ENCODE measurements at regions of chr17 and their contacts with region 1.

Region 1: DNA sequence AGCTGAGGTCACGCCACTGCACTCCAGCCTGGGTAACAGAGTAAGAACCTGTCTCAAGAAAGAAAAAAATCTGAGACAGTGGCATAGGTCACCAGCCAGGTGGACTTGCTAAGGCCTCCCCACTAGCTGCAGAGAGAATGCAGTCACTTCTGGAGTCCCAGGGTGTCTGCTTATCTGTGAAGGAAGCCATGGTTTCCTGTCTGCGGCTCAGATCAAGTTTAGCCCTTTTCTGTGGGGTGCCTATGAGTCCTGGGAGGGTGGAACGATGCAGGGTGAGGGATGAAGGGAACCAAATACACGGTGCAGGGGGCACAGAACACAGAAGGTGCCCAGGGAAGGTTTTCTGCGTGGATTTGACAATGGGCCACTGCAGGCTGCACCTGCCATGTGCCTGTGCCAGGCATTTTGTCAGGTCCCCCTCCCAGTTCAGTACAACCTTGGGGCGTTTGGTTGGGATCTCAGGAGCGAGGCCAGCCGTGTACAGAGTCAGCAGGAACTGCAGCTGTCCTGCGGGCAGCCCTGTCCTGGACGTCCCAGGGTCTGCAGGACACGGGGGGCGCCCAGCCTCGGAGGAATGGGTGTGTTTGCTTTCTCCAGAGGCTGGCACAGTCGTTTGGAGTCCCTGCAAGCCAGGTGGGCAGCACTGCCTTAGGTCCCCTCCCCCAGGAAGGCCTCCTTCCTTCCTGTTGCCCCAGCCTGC is 41.8 kb downstream of the RAB11FIP4 start:
- DNase-seq: peak; percentile 79
- ATAC-seq: peak; percentile 97
- H3K4me3 Mint-ChIP-seq: peak overlapping the region; percentile 50
- H3K27ac Mint-ChIP-seq: no peak overlapping the region
- H3K4me1 Mint-ChIP-seq: peaks cover 27% of the 10 kb centered on the region
- H3K27me3 Mint-ChIP-seq: peaks cover 30% of the 10 kb centered on the region

Region 2: GRCh38 chr17:31099016-31099415 is 334.2 kb before region 1 on chr17:
- CTCF ChIA-PET with region 1: no interaction called
- POLR2A ChIA-PET with region 1: no interaction called
- DNase-seq: no peak
- ATAC-seq: no peak
- H3K4me3 Mint-ChIP-seq: no peak overlapping the region
- H3K27ac Mint-ChIP-seq: no peak overlapping the region
- H3K4me1 Mint-ChIP-seq: peaks cover 11% of the 10 kb centered on the region
- H3K27me3 Mint-ChIP-seq: no peaks in the 10 kb centered on the region

Region 3: GRCh38 chr17:31524926-31525800 is 91.9 kb after region 1 on chr17:
- CTCF ChIA-PET with region 1: interaction called, 26 read pairs
- POLR2A ChIA-PET with region 1: no interaction called
- DNase-seq: peak; percentile 88
- ATAC-seq: peak; percentile 84
- H3K4me3 Mint-ChIP-seq: no peak overlapping the region
- H3K27ac Mint-ChIP-seq: no peak overlapping the region
- H3K4me1 Mint-ChIP-seq: no peaks in the 10 kb centered on the region
- H3K27me3 Mint-ChIP-seq: no peaks in the 10 kb centered on the region

Region 4: GRCh38 chr17:31533546-31534155 is 100.4 kb after region 1 on chr17:
- CTCF ChIA-PET with region 1: interaction called, 10 read pairs
- POLR2A ChIA-PET with region 1: no interaction called
- DNase-seq: no peak
- ATAC-seq: peak; percentile 20
- H3K4me3 Mint-ChIP-seq: no peak overlapping the region
- H3K27ac Mint-ChIP-seq: no peak overlapping the region
- H3K4me1 Mint-ChIP-seq: peaks cover 17% of the 10 kb centered on the region
- H3K27me3 Mint-ChIP-seq: no peaks in the 10 kb centered on the region